ENCODE measurements at regions of chr19 and their contacts with region 1.

Region 1: DNA sequence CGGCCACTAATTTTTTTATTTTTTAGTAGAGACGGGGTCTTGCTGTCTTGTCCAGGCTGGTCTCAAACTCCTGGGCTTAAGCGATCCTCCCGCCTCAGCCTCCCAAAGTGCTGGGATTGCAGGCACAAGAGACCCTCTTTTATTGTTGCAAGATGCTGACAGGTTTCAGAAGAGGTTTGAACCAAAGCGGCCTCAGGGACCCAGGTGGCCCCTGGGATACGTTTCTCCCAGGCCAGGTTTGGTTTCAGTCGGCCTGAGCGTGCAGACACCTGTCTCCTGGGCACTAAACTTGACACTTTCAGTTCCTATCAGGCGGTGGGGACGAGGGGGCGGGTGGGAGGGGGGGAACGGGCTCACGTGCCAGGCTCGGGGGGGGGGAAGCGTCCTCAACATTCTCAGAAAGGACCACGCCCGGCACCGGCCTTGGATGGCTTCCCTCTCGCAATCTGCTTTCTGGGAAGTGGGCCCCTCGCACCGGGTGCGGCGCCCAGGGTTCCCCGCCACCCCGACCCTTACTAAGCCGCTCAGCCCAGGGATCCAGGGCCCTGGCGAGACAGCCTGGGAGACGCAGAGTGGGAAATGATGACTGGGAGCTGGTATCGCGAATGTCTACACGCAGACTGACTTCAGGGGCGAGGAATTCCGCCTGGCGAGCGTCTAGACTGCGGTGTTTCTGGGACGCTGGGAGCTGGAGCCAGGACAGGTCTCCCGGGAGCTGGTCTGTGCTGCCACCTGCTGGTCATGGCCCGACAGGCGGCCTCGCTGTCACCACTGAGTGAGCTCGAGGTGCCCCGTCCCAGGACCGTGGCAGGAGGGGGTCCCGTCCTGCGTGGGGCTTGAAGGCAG is 91.6 kb downstream of the GNG7 start:
- DNase-seq: peak; percentile 94
- ATAC-seq: peak; percentile 95
- H3K4me3 ChIP-seq: peak overlapping the region; percentile 52
- H3K27ac ChIP-seq: peak overlapping the region; percentile 84
- H3K4me1 ChIP-seq: peaks cover 28% of the 10 kb centered on the region
- H3K27me3 ChIP-seq: no peaks in the 10 kb centered on the region
- CTCF ChIP-seq: peak; percentile 97

Region 2: DNA sequence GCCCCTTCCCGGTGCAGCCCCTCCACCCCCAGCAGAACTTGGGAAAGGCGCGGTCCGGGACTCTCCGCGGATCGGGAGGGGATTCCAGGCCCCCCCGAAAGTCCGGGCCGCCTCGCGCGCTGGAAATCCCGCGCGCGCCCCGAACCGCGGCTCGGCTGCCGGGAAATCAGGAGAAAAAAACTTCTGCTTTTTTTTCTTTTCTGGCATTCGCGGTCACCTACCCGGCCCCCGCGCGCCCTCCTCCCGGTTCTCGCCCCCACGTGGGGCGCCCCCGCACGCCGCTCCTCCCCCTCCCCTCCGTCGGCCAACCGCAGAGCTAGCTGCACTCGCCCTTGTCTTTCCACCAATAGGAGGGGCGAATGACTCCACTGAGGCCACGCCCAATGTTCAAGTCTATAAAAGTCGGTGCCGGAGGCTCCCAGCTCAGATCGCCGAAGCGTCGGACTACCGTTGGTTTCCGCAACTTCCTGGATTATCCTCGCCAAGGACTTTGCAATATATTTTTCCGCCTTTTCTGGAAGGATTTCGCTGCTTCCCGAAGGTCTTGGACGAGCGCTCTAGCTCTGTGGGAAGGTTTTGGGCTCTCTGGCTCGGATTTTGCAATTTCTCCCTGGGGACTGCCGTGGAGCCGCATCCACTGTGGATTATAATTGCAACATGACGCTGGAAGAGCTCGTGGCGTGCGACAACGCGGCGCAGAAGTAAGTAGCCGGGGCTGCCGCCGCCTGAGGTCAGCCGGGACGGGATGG is 135.0 kb before region 1 on chr19 and contains the start of gene GADD45B:
- intact Hi-C with region 1: loop called (anchors 10 kb)
- DNase-seq: peak; percentile 97
- ATAC-seq: peak; percentile 82 to 94
- H3K4me3 ChIP-seq: peak within 1 kb of the TSS; percentile 97
- H3K27ac ChIP-seq: peak within 1 kb of the TSS; percentile 89
- H3K4me1 ChIP-seq: peaks cover 38% of the 10 kb centered on the region
- H3K27me3 ChIP-seq: no peaks in the 10 kb centered on the region
- CTCF ChIP-seq: no peak
- total RNA-seq, gene GADD45B: 89.9 TPM

Region 3: GRCh38 chr19:2517868-2518625 is 92.8 kb before region 1 on chr19:
- intact Hi-C with region 1: no loop called
- DNase-seq: no peak
- ATAC-seq: no peak
- H3K4me3 ChIP-seq: no peak overlapping the region
- H3K27ac ChIP-seq: no peak overlapping the region
- H3K4me1 ChIP-seq: no peaks in the 10 kb centered on the region
- H3K27me3 ChIP-seq: no peaks in the 10 kb centered on the region
- CTCF ChIP-seq: no peak

Measured in lower lobe of right lung (tissue), 2 donors.